GM13976 (cell line): ENCODE measurements at regions of chr19 and their contacts with region 1.

Region 1: GRCh38 chr19:48794291-48794966 is 16.4 kb downstream of the BCAT2 start:
- DNase-seq: peak; percentile 21
- CTCF ChIP-seq: no peak

Region 2: DNA sequence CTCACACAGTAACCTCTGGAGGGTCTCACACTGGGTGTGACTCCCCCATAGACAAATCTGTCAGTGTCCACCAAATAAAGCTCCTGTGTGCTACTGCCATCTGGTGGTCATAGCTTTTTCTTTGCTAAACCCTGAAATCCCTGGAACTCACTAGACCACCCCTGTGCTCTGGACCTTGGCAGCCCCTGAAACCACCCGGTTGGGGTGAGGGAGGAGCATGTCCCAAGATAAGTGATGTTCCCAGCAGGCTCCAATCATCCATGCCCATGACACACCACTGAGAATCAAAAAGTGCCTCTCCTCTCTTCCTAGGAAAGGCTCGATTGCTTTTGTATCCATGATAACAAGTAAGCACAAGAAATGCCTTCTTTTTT is 48.3 kb after region 1 on chr19:
- in situ Hi-C with region 1: loop called (anchors 5 kb)
- DNase-seq: peak; percentile 67
- CTCF ChIP-seq: peak; percentile 56

Region 3: DNA sequence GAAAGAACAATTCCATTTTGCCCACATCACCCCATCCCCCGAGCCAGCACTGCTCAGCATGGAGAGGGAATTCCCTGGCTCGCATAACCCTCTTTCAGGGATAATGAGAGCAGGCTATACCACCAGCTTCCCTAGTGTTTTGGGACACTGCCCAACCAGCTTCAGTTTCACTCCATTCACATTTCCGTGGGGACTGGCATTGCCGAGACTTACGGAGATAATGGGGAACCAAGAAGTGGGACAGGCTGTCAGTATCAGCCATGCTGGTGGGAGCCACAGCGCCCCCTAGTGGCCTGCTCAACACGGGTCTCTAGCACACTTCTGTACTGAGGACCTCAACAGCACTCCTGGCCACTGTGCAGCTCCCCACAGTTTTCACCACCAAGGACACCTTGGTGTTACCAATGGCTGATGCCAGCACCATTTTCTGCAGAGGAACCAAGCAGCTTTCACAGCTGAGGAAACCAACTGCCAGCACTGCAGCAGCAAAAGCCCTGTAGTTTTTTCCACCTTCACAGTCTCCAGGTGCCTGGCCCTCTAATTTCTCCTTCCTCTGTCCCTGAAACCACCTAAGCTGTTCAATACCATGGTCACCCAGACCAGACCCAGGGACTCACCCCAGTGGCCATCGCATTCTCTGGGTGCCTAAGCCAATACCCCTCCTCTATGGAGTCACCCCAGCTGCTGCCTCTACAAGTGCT is 506.9 kb after region 1 on chr19:
- in situ Hi-C with region 1: no loop called
- DNase-seq: peak; percentile 93
- CTCF ChIP-seq: peak; percentile 91